ENCODE measurements at regions of chr19 and their contacts with region 1.

Region 1: DNA sequence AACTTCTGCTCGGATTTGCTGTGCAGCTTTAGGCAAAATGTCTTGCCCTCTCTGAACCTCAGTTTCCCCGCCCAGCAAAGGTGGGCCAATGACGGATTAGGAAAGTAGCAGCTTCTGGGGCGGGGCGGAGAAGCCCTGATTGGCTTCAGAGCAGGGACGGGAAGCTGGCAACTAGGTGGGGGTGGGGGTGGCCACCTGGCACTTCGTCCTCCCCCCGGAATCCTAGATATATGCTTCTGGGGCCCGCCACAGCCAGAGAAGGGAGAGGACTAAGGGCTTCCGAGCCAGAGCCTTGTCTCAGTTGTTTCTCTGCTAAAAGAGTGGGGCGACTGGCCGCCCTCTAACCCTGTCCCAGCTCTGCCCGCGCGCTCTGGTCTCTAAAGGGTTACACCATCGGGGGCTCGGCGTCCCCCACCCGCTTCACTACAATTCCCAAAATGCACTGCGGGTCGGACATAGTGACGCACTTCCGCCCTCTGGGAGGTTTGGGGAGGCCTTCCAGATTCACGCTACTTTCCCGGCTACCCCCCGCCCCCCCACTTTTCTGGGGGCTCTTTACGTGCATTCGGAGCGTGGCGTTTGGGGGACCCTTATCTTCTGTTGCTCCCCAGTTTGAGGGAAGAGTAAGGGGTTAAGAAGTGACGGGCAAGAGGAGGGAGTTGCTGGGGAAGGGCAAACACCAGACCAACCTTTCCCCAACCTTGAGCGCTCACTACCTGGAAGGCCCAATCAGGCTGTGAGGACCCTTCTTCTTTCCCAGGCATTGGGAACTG is 672 bp upstream of the IRF2BP1 start:
- DNase-seq: peak; percentile 81 to 96 (median 89)
- ATAC-seq: peak; percentile 69
- H3K4me3 ChIP-seq: peak overlapping the region; percentile 77 to 87
- H3K4me3 Mint-ChIP-seq: peak overlapping the region; percentile 98
- H3K27ac ChIP-seq: peak overlapping the region; percentile 69 to 92
- H3K27ac Mint-ChIP-seq: peak overlapping the region; percentile 97
- H3K4me1 ChIP-seq: peaks cover 41% of the 10 kb centered on the region
- H3K4me1 Mint-ChIP-seq: peaks cover 24% of the 10 kb centered on the region
- H3K27me3 ChIP-seq: no peaks in the 10 kb centered on the region
- H3K27me3 Mint-ChIP-seq: no peaks in the 10 kb centered on the region
- CTCF ChIP-seq: no peak

Region 2: DNA sequence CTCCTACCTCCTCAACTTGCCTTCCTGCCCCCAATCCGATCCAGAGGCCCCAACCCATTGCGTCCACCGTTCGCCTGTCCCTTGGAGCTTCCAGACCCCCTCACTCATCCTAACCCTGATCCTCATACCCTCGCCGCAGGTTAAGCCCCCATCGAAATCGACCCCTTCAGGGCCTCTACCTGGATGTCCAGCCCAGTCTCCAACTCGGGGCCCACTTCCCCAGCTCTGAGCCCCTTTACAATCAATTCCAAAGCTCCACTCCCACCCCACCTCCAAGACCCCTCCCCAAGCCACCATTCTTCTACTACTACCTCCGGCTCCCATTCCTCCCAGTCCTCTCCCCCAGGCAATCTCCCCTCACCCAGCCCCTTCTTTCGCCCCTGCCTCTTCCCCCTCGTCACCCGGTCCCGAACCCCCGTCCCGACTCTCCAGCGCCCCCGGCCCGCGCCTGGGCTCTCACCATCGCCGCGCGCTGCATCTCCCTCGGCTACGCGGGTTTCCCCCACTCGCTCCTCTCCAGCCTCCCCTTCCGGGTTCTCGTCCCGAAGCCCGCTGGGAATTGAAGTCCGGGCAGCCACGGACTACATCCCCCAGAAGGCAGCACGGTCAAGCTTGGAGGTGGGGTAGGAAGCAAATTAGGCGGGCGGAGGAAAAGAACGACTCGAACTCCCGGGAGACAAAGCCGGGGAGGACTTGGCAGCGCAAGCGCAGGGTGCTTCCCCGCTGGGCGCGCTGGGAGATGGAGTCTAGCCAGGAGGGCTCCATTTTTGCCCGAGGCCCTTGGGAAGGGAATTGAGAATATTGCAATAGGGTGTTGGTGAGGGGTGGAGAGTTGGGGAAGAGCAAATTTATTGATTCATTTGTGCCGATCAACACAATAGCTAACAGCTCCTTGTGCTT is 156.0 kb before region 1 on chr19 and contains the start of gene FBXO46:
- CTCF ChIA-PET with region 1: no interaction called
- POLR2A ChIA-PET with region 1: no interaction called
- intact Hi-C with region 1: loop called (anchors 1 to 5 kb)
- DNase-seq: peak; percentile 82 to 97 (median 92)
- ATAC-seq: peak; percentile 98
- H3K4me3 ChIP-seq: peak within 1 kb of the TSS; percentile 74 to 91
- H3K4me3 Mint-ChIP-seq: peak within 1 kb of the TSS; percentile 97
- H3K27ac ChIP-seq: peak within 1 kb of the TSS; percentile 67 to 78
- H3K27ac Mint-ChIP-seq: peak within 1 kb of the TSS; percentile 92
- H3K4me1 ChIP-seq: peaks cover 19% of the 10 kb centered on the region
- H3K4me1 Mint-ChIP-seq: peaks cover 32% of the 10 kb centered on the region
- H3K27me3 ChIP-seq: no peaks in the 10 kb centered on the region
- H3K27me3 Mint-ChIP-seq: no peaks in the 10 kb centered on the region
- CTCF ChIP-seq: no peak
- total RNA-seq, gene FBXO46: 15.2 to 17.1 TPM

Region 3: DNA sequence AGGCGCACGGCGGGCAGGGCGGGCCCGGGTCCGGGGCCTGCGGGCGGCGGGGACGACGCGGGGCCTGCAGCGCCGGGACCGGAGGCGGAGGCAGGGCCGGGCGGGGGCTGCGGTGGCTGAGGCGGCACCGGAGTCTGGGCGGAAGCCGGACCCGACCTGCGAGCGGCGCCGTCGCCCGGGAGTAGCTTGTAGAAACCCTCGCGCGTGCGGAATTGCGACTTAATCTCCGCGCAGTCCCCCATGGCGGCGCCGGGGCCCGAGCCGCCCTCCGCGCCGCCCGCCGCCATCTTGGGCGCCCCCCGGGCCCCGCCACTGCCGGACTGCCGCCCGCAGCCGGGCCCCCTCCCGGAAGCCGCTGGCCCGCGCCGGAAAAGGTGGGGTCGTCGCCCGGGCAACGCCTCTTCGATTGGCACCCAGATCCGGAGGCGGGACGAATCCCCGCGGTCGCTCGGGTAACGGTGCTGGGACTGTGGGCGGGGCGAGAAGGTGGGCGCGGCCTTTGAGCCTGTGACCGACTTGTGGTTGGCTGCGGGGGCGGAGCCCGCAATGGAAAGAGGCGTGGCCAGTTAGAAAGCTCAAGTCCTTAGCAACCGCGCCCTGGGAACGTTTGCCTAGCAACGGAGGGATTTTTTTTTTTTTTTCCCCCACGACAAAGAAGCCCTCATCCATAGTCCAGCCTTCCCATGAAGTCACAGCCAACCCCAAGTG is 94.0 kb before region 1 on chr19 and contains the start of gene DMWD:
- CTCF ChIA-PET with region 1: no interaction called
- POLR2A ChIA-PET with region 1: no interaction called
- intact Hi-C with region 1: loop called in 1 of 2 experiments (anchors 1 kb)
- DNase-seq: peak; percentile 99 to 100 (median 99)
- ATAC-seq: peak; percentile 96
- H3K4me3 ChIP-seq: peak within 1 kb of the TSS; percentile 55 to 62
- H3K4me3 Mint-ChIP-seq: peak within 1 kb of the TSS; percentile 90
- H3K27ac ChIP-seq: peak within 1 kb of the TSS; percentile 37 to 63
- H3K27ac Mint-ChIP-seq: peak within 1 kb of the TSS; percentile 75
- H3K4me1 ChIP-seq: peaks cover 28% of the 10 kb centered on the region
- H3K4me1 Mint-ChIP-seq: peaks cover 37% of the 10 kb centered on the region
- H3K27me3 ChIP-seq: peaks cover 3 to 6% of the 10 kb centered on the region in 2 experiments
- H3K27me3 Mint-ChIP-seq: peaks cover 18% of the 10 kb centered on the region
- CTCF ChIP-seq: no peak
- total RNA-seq, gene DMWD: 23.8 to 25.5 TPM

Region 4: GRCh38 chr19:45902651-45903625 is 16.3 kb after region 1 on chr19:
- CTCF ChIA-PET with region 1: interaction called, 5 read pairs
- POLR2A ChIA-PET with region 1: interaction called, 34 read pairs
- intact Hi-C with region 1: loop called (anchors 1 kb)
- DNase-seq: peak; percentile 98 to 100 (median 99)
- ATAC-seq: peak; percentile 82
- H3K4me3 ChIP-seq: peak overlapping the region; percentile 76 to 83
- H3K4me3 Mint-ChIP-seq: peak overlapping the region; percentile 92
- H3K27ac ChIP-seq: peak overlapping the region; percentile 64 to 77
- H3K27ac Mint-ChIP-seq: peak overlapping the region; percentile 72
- H3K4me1 ChIP-seq: peaks cover 17% of the 10 kb centered on the region
- H3K4me1 Mint-ChIP-seq: peaks cover 26% of the 10 kb centered on the region
- H3K27me3 ChIP-seq: no peaks in the 10 kb centered on the region
- H3K27me3 Mint-ChIP-seq: no peaks in the 10 kb centered on the region
- CTCF ChIP-seq: no peak

Region 5: DNA sequence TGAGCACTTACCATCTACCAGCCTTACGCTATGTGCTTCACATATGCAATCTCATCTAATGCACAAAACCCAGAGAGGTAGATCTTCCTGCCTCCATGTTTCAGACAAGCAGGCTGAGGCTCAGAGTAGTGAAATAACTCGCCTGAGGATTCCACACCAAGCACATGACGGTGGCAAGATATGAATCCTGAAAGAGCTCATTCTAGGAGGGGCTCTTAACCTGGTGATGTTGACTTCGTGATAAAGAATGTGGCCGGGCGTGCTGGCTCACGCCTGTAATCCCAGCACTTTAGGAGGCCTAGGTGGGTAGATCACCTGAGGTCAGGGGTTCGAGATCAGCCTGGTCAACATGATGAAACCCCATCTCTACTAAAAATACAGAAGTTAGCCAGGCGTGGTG is 82.0 kb after region 1 on chr19:
- CTCF ChIA-PET with region 1: no interaction called
- POLR2A ChIA-PET with region 1: no interaction called
- intact Hi-C with region 1: no loop called
- DNase-seq: no peak
- ATAC-seq: no peak
- H3K4me3 ChIP-seq: no peak overlapping the region
- H3K4me3 Mint-ChIP-seq: no peak overlapping the region
- H3K27ac ChIP-seq: no peak overlapping the region
- H3K27ac Mint-ChIP-seq: no peak overlapping the region
- H3K4me1 ChIP-seq: peaks cover 17% of the 10 kb centered on the region
- H3K4me1 Mint-ChIP-seq: peaks cover 15% of the 10 kb centered on the region
- H3K27me3 ChIP-seq: peaks cover 11 to 29% of the 10 kb centered on the region in 2 experiments
- H3K27me3 Mint-ChIP-seq: peaks cover 72% of the 10 kb centered on the region
- CTCF ChIP-seq: no peak

Region 6: GRCh38 chr19:45994989-45995714 is 108.5 kb after region 1 on chr19 and contains the start of gene CCDC61:
- CTCF ChIA-PET with region 1: no interaction called
- POLR2A ChIA-PET with region 1: no interaction called
- intact Hi-C with region 1: loop called (anchors 1 to 5 kb)
- DNase-seq: peak; percentile 92 to 99 (median 95)
- ATAC-seq: peak; percentile 95
- H3K4me3 ChIP-seq: peak within 1 kb of the TSS; percentile 73 to 77
- H3K4me3 Mint-ChIP-seq: no peak within 1 kb of the TSS
- H3K27ac ChIP-seq: peak within 1 kb of the TSS; percentile 64 to 74
- H3K27ac Mint-ChIP-seq: no peak within 1 kb of the TSS
- H3K4me1 ChIP-seq: peaks cover 16% of the 10 kb centered on the region
- H3K4me1 Mint-ChIP-seq: peaks cover 25% of the 10 kb centered on the region
- H3K27me3 ChIP-seq: no peaks in the 10 kb centered on the region
- H3K27me3 Mint-ChIP-seq: peaks cover 7% of the 10 kb centered on the region
- CTCF ChIP-seq: no peak
- total RNA-seq, gene CCDC61: 4.9 to 6.2 TPM

Region 7: GRCh38 chr19:46954993-46955812 is 1068.6 kb after region 1 on chr19:
- CTCF ChIA-PET with region 1: no interaction called
- POLR2A ChIA-PET with region 1: no interaction called
- intact Hi-C with region 1: no loop called
- DNase-seq: peak in 8 of 9 experiments; percentile 11 to 75 (median 42)
- ATAC-seq: peak; percentile 85
- H3K4me3 ChIP-seq: peak overlapping the region; percentile 33 to 40
- H3K4me3 Mint-ChIP-seq: peak overlapping the region; percentile 80
- H3K27ac ChIP-seq: peak overlapping the region; percentile 38 to 73
- H3K27ac Mint-ChIP-seq: peak overlapping the region; percentile 89
- H3K4me1 ChIP-seq: peaks cover 32% of the 10 kb centered on the region
- H3K4me1 Mint-ChIP-seq: peaks cover 69% of the 10 kb centered on the region
- H3K27me3 ChIP-seq: no peaks in the 10 kb centered on the region
- H3K27me3 Mint-ChIP-seq: no peaks in the 10 kb centered on the region
- CTCF ChIP-seq: no peak